Naive thymus-derived CD4-positive, alpha-beta T cell (primary cell): ENCODE measurements at regions of chr6 and their contacts with region 1.

Region 1: DNA sequence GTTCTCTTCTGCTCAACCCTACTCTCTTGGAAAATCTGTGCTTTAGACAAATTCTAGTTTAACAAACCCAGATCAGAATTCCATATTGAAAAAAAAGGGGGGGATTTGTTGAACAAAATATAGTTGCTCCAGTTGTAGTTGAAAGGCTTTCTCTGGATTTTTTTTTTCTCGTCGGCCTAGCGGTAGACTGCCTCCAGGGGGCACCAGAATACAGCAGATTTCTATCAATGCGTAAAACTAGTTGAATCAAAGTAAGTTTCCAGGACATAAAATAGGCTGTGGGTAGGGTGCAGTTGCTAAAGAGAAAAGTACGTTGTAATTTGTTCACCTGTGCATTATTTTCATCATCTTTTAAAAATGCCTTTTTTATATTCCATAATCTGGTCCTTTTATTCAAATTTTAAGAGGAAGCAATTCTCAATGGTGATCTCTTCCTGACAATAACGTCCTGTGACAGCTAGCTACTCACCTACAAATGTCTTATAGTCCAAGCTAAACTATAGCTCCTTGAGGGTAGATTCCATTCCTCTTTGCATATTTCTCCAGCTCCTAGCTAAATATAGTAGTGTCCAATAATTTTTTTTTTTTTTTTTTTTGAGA is 105.4 kb downstream of the PERP start:
- DNase-seq: peak in 8 of 9 donors; percentile 37 to 65 (median 56)
- ATAC-seq: peak; percentile 79
- H3K4me3 ChIP-seq: no peak overlapping the region
- H3K4me3 Mint-ChIP-seq: no peak overlapping the region
- H3K27ac ChIP-seq: no peak overlapping the region
- H3K27ac Mint-ChIP-seq: peak overlapping the region in 1 of 9 donors; percentile 27
- H3K4me1 ChIP-seq: no peaks in the 10 kb centered on the region
- H3K4me1 Mint-ChIP-seq: peaks cover 0 to 16% (median 5%) of the 10 kb centered on the region in 7 donors
- H3K27me3 ChIP-seq: no peaks in the 10 kb centered on the region
- H3K27me3 Mint-ChIP-seq: peaks cover 0 to 11% (median 0%) of the 10 kb centered on the region in 5 donors

Region 2: GRCh38 chr6:138182939-138183789 is 181.3 kb after region 1 on chr6:
- CTCF ChIA-PET with region 1: no interaction called
- POLR2A ChIA-PET with region 1: no interaction called
- intact Hi-C with region 1: no loop called
- DNase-seq: no peak
- ATAC-seq: no peak
- H3K4me3 ChIP-seq: no peak overlapping the region
- H3K4me3 Mint-ChIP-seq: no peak overlapping the region
- H3K27ac ChIP-seq: no peak overlapping the region
- H3K27ac Mint-ChIP-seq: no peak overlapping the region
- H3K4me1 ChIP-seq: no peaks in the 10 kb centered on the region
- H3K4me1 Mint-ChIP-seq: no peaks in the 10 kb centered on the region
- H3K27me3 ChIP-seq: no peaks in the 10 kb centered on the region
- H3K27me3 Mint-ChIP-seq: peaks cover 8 to 40% (median 27%) of the 10 kb centered on the region in 5 donors

Region 3: GRCh38 chr6:138287144-138287955 is 285.5 kb after region 1 on chr6:
- CTCF ChIA-PET with region 1: interaction called, 3 read pairs
- POLR2A ChIA-PET with region 1: no interaction called
- intact Hi-C with region 1: loop called (anchors 1 to 5 kb)
- DNase-seq: peak in 8 of 9 donors; percentile 15 to 43 (median 26)
- ATAC-seq: peak; percentile 44
- H3K4me3 ChIP-seq: no peak overlapping the region
- H3K4me3 Mint-ChIP-seq: no peak overlapping the region
- H3K27ac ChIP-seq: no peak overlapping the region
- H3K27ac Mint-ChIP-seq: no peak overlapping the region
- H3K4me1 ChIP-seq: no peaks in the 10 kb centered on the region
- H3K4me1 Mint-ChIP-seq: no peaks in the 10 kb centered on the region
- H3K27me3 ChIP-seq: no peaks in the 10 kb centered on the region
- H3K27me3 Mint-ChIP-seq: peaks cover 0 to 4% (median 0%) of the 10 kb centered on the region in 5 donors